ENCODE measurements at regions of chr11 and their contacts with region 1.

Region 1: DNA sequence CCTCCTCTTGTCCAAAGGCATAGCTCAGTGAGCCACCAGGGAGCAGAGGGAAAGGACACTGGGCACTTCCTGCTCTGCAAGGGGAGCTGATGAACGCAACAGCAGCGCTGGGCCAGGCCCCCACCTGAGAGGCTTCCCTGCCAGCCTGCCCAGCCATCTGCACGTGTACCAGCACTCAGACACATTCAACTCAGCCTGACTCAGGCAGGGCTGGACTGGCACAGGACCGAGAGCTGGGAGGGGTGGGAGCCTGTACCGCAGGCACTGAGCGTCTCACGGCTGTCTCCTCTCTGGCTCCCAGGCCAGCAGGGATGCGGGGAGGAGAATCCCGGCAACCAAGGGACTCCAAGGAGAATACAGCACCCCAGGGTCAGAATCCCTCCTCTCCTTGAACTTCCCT is 411.8 kb downstream of the CTTN start:
- DNase-seq: no peak
- H3K4me3 ChIP-seq: no peak overlapping the region
- H3K27ac ChIP-seq: no peak overlapping the region
- H3K4me1 ChIP-seq: no peaks in the 10 kb centered on the region
- H3K27me3 ChIP-seq: no peaks in the 10 kb centered on the region
- CTCF ChIP-seq: no peak

Region 2: GRCh38 chr11:70297341-70297740 is 512.8 kb before region 1 on chr11:
- intact Hi-C with region 1: no loop called
- DNase-seq: no peak
- H3K4me3 ChIP-seq: no peak overlapping the region
- H3K27ac ChIP-seq: no peak overlapping the region
- H3K4me1 ChIP-seq: no peaks in the 10 kb centered on the region
- H3K27me3 ChIP-seq: no peaks in the 10 kb centered on the region
- CTCF ChIP-seq: no peak

Region 3: DNA sequence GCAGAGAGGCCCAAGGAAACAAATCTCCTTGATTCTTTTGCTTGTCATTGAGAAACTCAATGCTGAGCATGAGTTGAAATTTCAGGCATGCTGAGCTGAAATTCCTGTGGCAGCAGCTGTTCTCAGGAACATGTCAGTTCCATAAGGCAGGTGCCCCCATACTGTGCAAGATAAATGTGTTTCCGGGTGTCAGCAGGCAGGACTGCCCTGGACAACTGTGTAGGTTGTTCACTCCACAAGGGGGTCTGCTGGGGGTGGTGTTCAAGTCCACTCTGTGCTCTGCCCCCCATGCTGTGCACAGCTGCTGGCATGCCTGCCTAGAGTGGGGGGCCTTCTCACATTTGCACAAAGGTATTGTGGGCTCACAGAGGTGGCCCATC is 278.1 kb before region 1 on chr11:
- intact Hi-C with region 1: no loop called
- DNase-seq: no peak
- H3K4me3 ChIP-seq: no peak overlapping the region
- H3K27ac ChIP-seq: no peak overlapping the region
- H3K4me1 ChIP-seq: peaks cover 4% of the 10 kb centered on the region
- H3K27me3 ChIP-seq: no peaks in the 10 kb centered on the region
- CTCF ChIP-seq: no peak

Region 4: GRCh38 chr11:70628855-70629844 is 181.0 kb before region 1 on chr11:
- intact Hi-C with region 1: no loop called
- DNase-seq: peak; percentile 89
- H3K4me3 ChIP-seq: no peak overlapping the region
- H3K27ac ChIP-seq: no peak overlapping the region
- H3K4me1 ChIP-seq: peaks cover 10% of the 10 kb centered on the region
- H3K27me3 ChIP-seq: no peaks in the 10 kb centered on the region
- CTCF ChIP-seq: no peak

Region 5: DNA sequence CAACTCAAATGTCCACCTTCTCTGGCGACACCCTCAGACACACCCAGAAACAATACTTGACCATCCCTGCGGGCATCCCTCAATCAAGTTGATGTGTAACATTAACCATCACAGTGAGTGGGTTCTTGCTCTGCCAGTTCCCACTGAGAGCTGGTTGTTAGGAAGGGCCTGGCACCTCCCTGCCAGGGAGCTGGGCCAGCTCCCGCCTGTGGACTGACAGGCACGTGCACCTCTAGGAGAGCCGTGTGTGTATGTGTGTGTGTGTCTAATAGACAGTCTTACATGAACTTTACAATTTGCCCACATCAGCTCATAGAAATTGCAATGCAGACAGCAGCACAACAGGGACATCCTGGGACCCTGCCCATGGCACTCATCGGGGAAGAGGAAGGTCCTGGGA is 143.6 kb after region 1 on chr11:
- intact Hi-C with region 1: no loop called
- DNase-seq: no peak
- H3K4me3 ChIP-seq: no peak overlapping the region
- H3K27ac ChIP-seq: no peak overlapping the region
- H3K4me1 ChIP-seq: no peaks in the 10 kb centered on the region
- H3K27me3 ChIP-seq: no peaks in the 10 kb centered on the region
- CTCF ChIP-seq: no peak

Region 6: DNA sequence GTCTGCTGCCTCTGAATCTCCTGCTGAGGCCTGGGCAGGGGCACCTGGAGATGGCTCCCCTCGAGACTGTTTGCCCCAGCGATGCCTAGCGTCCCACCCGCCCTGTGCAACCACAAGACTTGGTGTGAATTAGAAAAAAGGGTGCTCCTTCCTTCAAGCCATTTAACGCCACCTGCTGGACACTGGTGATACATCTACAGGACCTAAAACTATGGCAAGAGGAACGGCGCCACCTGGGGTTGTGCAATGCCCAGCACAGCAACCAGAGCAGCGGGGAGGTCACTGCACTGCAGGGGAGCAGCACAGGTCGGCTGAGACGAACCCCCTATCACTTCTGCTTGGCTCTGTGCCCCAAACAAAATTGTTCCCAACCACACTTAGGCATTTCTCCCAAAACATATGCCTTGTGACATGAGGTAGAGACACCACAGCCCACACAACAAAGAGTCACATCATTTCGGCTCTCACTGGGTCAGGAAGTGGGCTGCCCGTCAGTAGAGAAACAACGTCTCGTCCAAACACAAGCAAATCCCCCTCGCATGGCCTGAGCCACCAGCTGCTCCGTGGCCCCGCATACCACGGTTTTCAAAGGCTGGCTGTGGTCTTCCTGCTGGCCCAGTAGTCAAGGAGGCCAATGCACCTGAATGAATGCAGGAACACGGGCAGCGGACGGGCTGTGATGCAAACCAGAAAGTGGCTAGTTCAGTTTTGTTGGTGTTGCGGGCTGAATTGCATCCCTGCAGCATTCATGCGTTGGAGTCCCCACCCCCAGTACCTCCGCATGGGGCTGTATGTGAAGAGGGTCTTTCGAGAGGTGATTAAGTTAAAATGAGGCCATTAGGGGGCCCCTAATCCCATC is 270.3 kb after region 1 on chr11:
- intact Hi-C with region 1: loop called (anchors 5 kb)
- DNase-seq: peak; percentile 81
- H3K4me3 ChIP-seq: no peak overlapping the region
- H3K27ac ChIP-seq: no peak overlapping the region
- H3K4me1 ChIP-seq: no peaks in the 10 kb centered on the region
- H3K27me3 ChIP-seq: no peaks in the 10 kb centered on the region
- CTCF ChIP-seq: peak; percentile 43

Region 7: GRCh38 chr11:71420455-71421241 is 610.5 kb after region 1 on chr11:
- intact Hi-C with region 1: loop called (anchors 5 kb)
- DNase-seq: peak; percentile 53
- H3K4me3 ChIP-seq: no peak overlapping the region
- H3K27ac ChIP-seq: no peak overlapping the region
- H3K4me1 ChIP-seq: no peaks in the 10 kb centered on the region
- H3K27me3 ChIP-seq: no peaks in the 10 kb centered on the region
- CTCF ChIP-seq: peak; percentile 64